PC-3 (cell line): ENCODE measurements at regions of chr10 and their contacts with region 1.

Region 1: DNA sequence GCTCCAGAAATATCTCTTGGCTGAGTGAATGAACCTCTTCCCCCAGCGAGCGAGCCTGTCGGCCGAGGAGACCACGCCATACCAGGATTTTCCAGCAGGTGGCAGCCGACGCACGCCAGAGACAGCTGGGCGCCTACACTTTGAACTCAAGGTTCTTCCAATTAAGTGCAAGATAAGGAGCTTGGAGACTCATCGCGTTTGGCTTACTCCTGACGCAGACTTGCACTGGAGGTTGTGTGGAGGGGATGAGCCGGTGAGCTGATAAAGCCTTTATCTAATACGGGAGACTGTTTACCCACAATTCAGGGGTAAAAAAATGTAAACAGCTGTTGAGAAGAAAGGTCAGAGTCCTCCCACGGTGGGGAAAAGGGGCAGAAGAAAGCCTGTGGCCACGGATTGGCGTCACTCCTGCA is 45.9 kb upstream of the EMX2 start:
- DNase-seq: peak; percentile 84
- ATAC-seq: peak; percentile 84
- H3K4me3 ChIP-seq: no peak overlapping the region
- H3K27ac ChIP-seq: no peak overlapping the region
- H3K4me1 ChIP-seq: no peaks in the 10 kb centered on the region
- H3K27me3 ChIP-seq: peaks cover 52% of the 10 kb centered on the region
- CTCF ChIP-seq: peak; percentile 88

Region 2: GRCh38 chr10:118241229-118242137 is 744.9 kb after region 1 on chr10:
- CTCF ChIA-PET with region 1: interaction called, 4 read pairs
- POLR2A ChIA-PET with region 1: no interaction called
- intact Hi-C with region 1: loop called (anchors 1 kb)
- DNase-seq: peak; percentile 83
- ATAC-seq: peak; percentile 74
- H3K4me3 ChIP-seq: 0 out of 2 replicates have a peak overlapping the region, but pooled peaks have one; percentile 7
- H3K27ac ChIP-seq: no peak overlapping the region
- H3K4me1 ChIP-seq: peaks cover 3% of the 10 kb centered on the region; the same call in 1 of the 2 replicates
- H3K27me3 ChIP-seq: peaks cover 71% of the 10 kb centered on the region
- CTCF ChIP-seq: peak; percentile 88

Region 3: DNA sequence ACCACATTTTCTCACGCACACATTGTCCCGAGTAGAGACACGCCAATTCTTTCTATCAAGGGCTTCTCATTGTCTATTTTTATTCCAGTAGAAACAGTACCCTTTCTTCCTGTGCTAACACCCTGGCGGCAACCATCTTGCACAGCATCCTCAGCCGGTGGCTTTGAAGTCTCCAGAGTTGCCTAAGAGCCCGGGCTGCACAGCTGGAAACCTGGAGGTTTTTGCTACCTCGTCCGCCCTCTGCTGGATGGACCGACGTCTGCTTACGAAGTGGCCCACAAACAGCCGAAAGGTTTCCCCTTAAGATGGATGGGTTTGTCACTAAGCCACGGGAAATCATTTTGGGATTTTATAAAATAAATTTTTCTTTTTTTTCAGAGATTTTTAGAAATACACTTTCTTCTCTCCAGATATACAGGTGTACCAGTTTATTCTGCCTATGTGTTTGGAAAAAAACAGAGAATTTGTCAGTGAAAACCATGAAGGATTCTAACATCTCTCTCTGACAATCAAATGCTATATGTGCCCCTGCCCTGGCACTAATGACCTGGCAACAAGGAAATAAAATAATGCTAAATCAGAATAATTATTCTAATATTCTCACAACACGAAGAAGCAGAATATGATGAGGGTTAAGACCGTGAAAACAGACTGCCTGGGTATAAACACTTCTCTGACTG is 927.3 kb after region 1 on chr10:
- CTCF ChIA-PET with region 1: no interaction called
- POLR2A ChIA-PET with region 1: no interaction called
- intact Hi-C with region 1: loop called (anchors 5 kb)
- DNase-seq: peak; percentile 77
- ATAC-seq: peak; percentile 98
- H3K4me3 ChIP-seq: no peak overlapping the region
- H3K27ac ChIP-seq: no peak overlapping the region
- H3K4me1 ChIP-seq: no peaks in the 10 kb centered on the region
- H3K27me3 ChIP-seq: peaks cover 31% of the 10 kb centered on the region
- CTCF ChIP-seq: peak; percentile 68

Region 4: GRCh38 chr10:118459726-118460193 is 963.1 kb after region 1 on chr10:
- CTCF ChIA-PET with region 1: no interaction called
- POLR2A ChIA-PET with region 1: no interaction called
- intact Hi-C with region 1: loop called (anchors 1 kb)
- DNase-seq: peak; percentile 73
- ATAC-seq: peak; percentile 87
- H3K4me3 ChIP-seq: no peak overlapping the region
- H3K27ac ChIP-seq: no peak overlapping the region
- H3K4me1 ChIP-seq: no peaks in the 10 kb centered on the region
- H3K27me3 ChIP-seq: peaks cover 78% of the 10 kb centered on the region
- CTCF ChIP-seq: peak; percentile 71

Region 5: DNA sequence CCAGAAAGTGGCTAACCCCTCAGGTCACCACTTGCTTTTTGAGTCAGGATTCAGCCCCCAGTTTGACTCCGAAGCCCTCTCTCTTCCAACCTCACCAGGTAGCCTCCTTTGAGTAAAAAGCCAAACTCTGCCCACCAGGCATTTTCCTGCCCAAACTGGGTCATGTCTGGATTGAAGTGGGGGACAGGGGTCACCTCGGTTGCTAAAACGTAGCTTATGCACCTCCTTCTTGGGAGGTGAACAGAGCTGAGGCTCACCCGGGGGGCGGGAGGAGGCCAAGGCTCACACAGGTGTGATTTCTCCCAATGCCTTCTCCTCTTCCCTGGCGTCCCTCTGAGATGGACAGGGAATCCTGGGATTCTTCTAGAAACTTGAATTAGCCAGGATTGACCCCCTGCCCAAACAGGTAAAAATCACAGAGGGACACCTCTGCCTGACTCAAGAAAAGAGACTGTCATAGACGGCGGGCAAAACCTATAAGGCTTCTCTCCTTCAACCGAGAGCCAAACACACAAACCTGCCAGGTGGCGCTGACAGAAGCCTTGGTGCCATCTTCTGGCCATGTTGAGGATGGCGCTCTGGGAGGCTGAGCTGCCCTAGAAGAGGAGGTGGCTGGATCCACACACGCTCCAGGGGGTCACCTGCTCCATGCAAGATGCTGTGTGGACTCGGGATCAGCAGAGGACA is 1047.2 kb after region 1 on chr10:
- CTCF ChIA-PET with region 1: interaction called, 3 read pairs
- POLR2A ChIA-PET with region 1: no interaction called
- intact Hi-C with region 1: loop called (anchors 1 kb)
- DNase-seq: peak; percentile 70
- ATAC-seq: peak; percentile 90
- H3K4me3 ChIP-seq: no peak overlapping the region
- H3K27ac ChIP-seq: no peak overlapping the region
- H3K4me1 ChIP-seq: no peaks in the 10 kb centered on the region
- H3K27me3 ChIP-seq: peaks cover 25% of the 10 kb centered on the region
- CTCF ChIP-seq: peak; percentile 78